ENCODE measurements at regions of chr3 and their contacts with region 1.

Region 1: GRCh38 chr3:7285505-7285904 is 424.6 kb downstream of the GRM7 start:
- DNase-seq: no peak
- ATAC-seq: peak; percentile 78
- H3K4me3 ChIP-seq: no peak overlapping the region
- H3K27ac ChIP-seq: no peak overlapping the region
- H3K4me1 ChIP-seq: no peaks in the 10 kb centered on the region
- H3K27me3 ChIP-seq: no peaks in the 10 kb centered on the region
- CTCF ChIP-seq: peak in 1 of 3 experiments; percentile 23; a peak in 1 of 6 replicates
- EP300 ChIP-seq: no peak
- POLR2A ChIP-seq: no peak
- RAD21 ChIP-seq: peak; percentile 19; the same call in 1 of the 2 replicates

Region 2: DNA sequence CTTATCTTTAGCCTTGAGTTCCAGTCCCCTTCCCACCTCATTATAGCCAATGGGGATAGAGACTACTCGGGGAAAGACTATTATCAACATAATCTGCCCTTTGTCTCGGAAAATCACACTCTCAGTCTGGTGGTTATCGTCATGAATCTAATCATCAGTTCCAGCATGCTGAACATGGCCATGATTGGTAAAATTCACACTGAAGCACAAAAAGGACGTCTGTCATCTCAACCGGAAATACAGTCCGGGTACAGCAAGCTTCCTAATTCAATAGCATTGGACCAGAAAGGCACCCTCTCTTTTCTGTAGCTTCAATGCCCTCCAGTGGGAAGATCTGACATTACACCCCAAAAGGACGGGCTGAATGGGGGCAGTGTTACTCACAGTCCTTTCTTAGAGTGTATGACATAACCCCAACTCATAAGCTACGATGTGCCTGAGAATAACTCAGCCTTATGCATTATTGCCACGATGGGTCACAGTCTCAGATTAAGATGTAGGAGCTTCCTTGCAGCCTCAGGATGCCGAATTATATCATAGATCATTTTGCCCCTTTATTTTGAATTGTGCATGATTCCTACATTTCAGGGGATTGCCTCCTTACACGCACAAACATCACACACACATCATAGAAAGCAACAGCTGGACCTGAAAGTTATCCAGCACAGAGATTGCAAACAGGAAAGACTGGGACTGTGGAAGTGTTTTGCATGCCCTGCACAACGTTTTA is 825.7 kb after region 1 on chr3:
- CTCF ChIA-PET with region 1: interaction called, 6 read pairs
- POLR2A ChIA-PET with region 1: no interaction called
- RAD21 ChIA-PET with region 1: no interaction called
- SMC1A ChIA-PET with region 1: interaction called, 6 read pairs
- in situ Hi-C with region 1: no loop called
- intact Hi-C with region 1: loop called (anchors 5 kb)
- DNase-seq: peak; percentile 16
- ATAC-seq: peak; percentile 99
- H3K4me3 ChIP-seq: no peak overlapping the region
- H3K27ac ChIP-seq: no peak overlapping the region
- H3K4me1 ChIP-seq: no peaks in the 10 kb centered on the region
- H3K27me3 ChIP-seq: no peaks in the 10 kb centered on the region
- CTCF ChIP-seq: peak; percentile 70 to 80 (median 72)
- EP300 ChIP-seq: no peak
- POLR2A ChIP-seq: no peak
- RAD21 ChIP-seq: peak; percentile 86

Region 3: GRCh38 chr3:8239718-8240695 is 954.5 kb after region 1 on chr3:
- CTCF ChIA-PET with region 1: interaction called, 7 read pairs
- POLR2A ChIA-PET with region 1: no interaction called
- RAD21 ChIA-PET with region 1: interaction called, 3 read pairs
- SMC1A ChIA-PET with region 1: interaction called, 10 read pairs
- in situ Hi-C with region 1: no loop called
- intact Hi-C with region 1: no loop called
- DNase-seq: no peak
- ATAC-seq: peak; percentile 89
- H3K4me3 ChIP-seq: no peak overlapping the region
- H3K27ac ChIP-seq: no peak overlapping the region
- H3K4me1 ChIP-seq: no peaks in the 10 kb centered on the region
- H3K27me3 ChIP-seq: no peaks in the 10 kb centered on the region
- CTCF ChIP-seq: peak; percentile 72 to 91 (median 89)
- EP300 ChIP-seq: no peak
- POLR2A ChIP-seq: no peak
- RAD21 ChIP-seq: peak; percentile 63

Measured in GM12878 (cell line).